PC-9 (cell line): ENCODE measurements at regions of chr12 and their contacts with region 1.

Region 1: GRCh38 chr12:46963977-46964971 is 115.1 kb upstream of the PCED1B start:
- DNase-seq: peak; percentile 66 to 93
- H3K4me3 ChIP-seq: no peak overlapping the region
- H3K27ac ChIP-seq: peak overlapping the region; percentile 60
- H3K4me1 ChIP-seq: peaks cover 43% of the 10 kb centered on the region
- H3K27me3 ChIP-seq: no peaks in the 10 kb centered on the region
- CTCF ChIP-seq: no peak

Region 2: DNA sequence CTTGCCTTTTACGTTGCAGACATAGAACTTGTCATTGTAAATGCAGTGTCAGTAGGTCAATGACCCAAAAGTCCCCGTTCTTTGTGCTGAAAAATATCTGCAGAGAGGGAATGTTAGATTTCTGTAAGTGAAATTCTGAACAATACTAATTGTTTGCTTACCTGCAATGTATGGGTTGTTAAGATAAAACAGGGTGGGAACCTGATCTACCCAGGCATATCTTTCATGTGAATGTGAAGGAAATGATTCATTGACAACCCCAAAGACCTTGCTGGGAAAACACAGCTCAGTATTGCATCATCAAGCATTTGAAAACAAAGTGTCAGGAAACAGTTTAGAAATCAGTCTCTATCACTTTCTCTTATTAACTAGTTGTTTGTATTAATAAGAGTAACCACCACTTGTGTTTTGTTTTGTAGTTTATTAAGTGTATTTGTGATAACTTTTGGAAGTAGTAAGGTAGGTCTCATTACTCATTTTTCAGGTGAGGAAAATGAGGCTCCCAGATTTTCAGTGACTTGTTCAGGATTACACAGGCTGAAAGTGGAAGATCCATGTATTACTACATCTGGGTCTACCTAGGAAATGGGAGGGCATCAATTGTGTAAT is 533.8 kb before region 1 on chr12:
- CTCF ChIA-PET with region 1: no interaction called
- POLR2A ChIA-PET with region 1: no interaction called
- intact Hi-C with region 1: loop called (anchors 10 kb)
- DNase-seq: peak; percentile 28 to 98
- H3K4me3 ChIP-seq: peak overlapping the region; percentile 34; the same call in 1 of the 2 replicates
- H3K27ac ChIP-seq: peak overlapping the region; percentile 95
- H3K4me1 ChIP-seq: peaks cover 41% of the 10 kb centered on the region
- H3K27me3 ChIP-seq: no peaks in the 10 kb centered on the region
- CTCF ChIP-seq: no peak

Region 3: DNA sequence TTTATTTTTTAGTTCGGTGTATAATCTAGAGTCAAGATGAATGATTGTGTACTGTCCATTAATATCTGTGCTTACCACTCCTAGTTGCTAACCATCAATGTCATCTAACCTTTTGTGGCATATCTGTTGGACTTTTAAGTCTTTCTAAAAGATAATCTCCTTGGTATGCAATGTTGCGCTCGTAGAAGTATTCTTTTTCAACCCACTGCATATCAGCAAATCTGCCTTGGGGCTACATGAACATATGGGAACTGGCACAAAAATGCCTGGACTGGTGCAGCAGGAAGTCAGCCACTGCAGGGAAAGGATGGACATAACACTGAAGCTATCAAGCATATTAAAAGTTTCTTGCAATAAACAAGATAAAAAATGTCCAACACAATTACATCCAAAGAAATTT is 14.2 kb before region 1 on chr12:
- CTCF ChIA-PET with region 1: no interaction called
- POLR2A ChIA-PET with region 1: interaction called, 8 read pairs
- intact Hi-C with region 1: loop called (anchors 1 kb)
- DNase-seq: peak; percentile 72 to 87
- H3K4me3 ChIP-seq: no peak overlapping the region
- H3K27ac ChIP-seq: no peak overlapping the region
- H3K4me1 ChIP-seq: peaks cover 14% of the 10 kb centered on the region
- H3K27me3 ChIP-seq: no peaks in the 10 kb centered on the region
- CTCF ChIP-seq: no peak

Region 4: DNA sequence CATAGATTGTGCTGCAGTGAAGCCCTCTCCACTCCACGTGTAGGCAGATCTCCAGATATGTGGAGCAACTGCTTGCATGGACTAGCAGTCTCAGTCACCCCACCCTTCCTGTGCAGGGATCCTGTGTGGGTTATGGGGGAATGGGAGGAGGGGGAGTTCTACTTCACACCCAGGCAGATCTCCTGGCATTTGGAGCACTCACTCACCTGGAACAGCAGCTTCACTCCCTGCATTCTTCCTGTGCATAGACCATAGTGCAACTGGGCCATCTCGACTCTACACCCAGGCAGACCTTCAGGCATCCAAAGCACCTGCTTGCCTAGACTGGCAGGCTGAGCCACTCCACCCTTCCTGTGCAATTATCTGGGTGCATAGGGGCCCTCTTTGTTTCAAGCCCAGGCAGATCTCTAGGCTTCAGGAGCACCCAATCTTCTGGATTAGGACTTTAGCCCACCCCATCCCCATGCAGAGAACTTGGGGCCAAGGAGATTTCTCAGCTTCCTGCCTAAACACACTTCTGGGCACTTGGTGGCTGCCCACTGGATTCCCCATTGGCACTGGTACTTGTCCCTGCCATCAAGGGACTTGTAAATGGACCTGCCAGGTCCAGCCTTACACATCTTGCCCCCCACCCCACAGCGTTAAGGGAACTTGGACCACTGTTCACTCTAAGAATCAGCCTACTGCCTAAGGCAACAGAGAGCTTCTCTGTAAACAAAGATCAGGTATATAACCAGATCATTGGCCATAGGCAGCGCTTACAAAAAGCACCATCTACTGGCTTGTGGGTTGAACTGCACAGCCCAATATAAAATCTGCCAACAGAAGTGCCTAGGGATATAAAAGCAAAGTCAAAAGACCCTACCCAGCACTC is 19.4 kb after region 1 on chr12:
- CTCF ChIA-PET with region 1: no interaction called
- POLR2A ChIA-PET with region 1: no interaction called
- intact Hi-C with region 1: loop called (anchors 1 kb)
- DNase-seq: peak; percentile 44 to 62
- H3K4me3 ChIP-seq: no peak overlapping the region
- H3K27ac ChIP-seq: no peak overlapping the region
- H3K4me1 ChIP-seq: peaks cover 14% of the 10 kb centered on the region
- H3K27me3 ChIP-seq: no peaks in the 10 kb centered on the region
- CTCF ChIP-seq: peak; percentile 84

Region 5: GRCh38 chr12:47014474-47014873 is 50.2 kb after region 1 on chr12:
- CTCF ChIA-PET with region 1: no interaction called
- POLR2A ChIA-PET with region 1: interaction called, 10 read pairs
- intact Hi-C with region 1: no loop called
- DNase-seq: peak in 1 of 2 experiments; percentile 42
- H3K4me3 ChIP-seq: no peak overlapping the region
- H3K27ac ChIP-seq: peak overlapping the region; percentile 14; the same call in 1 of the 2 replicates
- H3K4me1 ChIP-seq: peaks cover 27% of the 10 kb centered on the region
- H3K27me3 ChIP-seq: no peaks in the 10 kb centered on the region
- CTCF ChIP-seq: no peak